Psoas muscle (tissue), 8 donors: ENCODE measurements at regions of chr11 and their contacts with region 1.

Region 1: DNA sequence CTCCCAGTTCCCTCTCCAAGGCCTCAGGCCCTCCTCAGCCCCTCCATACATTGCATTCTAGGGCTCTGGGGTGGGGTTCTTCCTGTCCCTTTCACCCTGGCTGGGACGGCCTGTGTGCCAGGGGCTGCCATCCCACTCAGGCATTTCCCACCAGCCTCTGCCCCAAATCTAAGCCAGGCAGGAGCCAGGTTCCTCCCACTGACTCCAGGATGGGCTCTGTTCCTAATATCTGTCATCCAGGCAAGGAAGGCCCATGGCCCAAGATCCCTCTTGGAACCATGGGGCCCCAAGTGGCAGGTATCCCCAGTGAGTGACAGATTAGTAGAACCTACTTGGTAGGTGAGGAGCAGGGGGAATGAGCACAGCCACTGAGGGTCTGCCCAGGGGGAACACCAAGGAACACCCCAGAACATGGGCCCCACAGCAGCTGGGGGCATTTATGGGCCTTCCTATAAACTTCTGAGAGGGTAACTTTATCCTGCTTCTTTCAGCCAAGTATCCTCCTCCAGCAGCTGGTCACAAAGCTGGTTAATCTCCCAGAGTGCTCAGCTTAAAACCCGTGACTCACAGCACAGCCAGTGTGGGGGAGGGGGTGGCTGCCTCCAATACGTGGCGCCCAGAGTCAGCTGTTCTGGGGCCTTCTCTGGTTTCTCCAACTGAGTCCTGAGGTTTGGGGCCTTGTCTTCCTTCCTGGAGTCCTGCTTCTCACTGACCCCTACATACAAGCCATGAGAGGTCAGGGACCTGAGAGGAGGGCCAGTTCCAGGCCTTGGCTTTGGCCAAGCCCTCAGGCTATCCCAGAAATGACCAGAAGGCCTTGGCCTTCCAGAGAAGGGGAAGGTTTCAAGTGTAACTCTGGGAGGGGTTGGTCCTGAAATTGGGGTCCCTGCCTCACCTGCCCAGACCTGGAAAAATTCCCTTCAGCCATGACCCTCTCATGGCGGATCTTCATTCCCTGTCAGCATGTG is 19.9 kb upstream of the MYOD1 start:
- DNase-seq: peak; percentile 85 to 95
- ATAC-seq: peak; percentile 87 to 91 (median 88)
- H3K4me3 ChIP-seq: no peak overlapping the region
- H3K27ac ChIP-seq: peak overlapping the region; percentile 96
- H3K4me1 ChIP-seq: peaks cover 57% of the 10 kb centered on the region
- H3K27me3 ChIP-seq: no peaks in the 10 kb centered on the region
- CTCF ChIP-seq: no peak

Region 2: GRCh38 chr11:17683378-17684161 is 15.9 kb before region 1 on chr11:
- intact Hi-C with region 1: loop called in 1 of 2 experiments (anchors 1 kb)
- DNase-seq: peak; percentile 71 to 82
- ATAC-seq: peak; percentile 69 to 73 (median 70)
- H3K4me3 ChIP-seq: no peak overlapping the region
- H3K27ac ChIP-seq: peak overlapping the region; percentile 88
- H3K4me1 ChIP-seq: peaks cover 52% of the 10 kb centered on the region
- H3K27me3 ChIP-seq: no peaks in the 10 kb centered on the region
- CTCF ChIP-seq: no peak

Region 3: DNA sequence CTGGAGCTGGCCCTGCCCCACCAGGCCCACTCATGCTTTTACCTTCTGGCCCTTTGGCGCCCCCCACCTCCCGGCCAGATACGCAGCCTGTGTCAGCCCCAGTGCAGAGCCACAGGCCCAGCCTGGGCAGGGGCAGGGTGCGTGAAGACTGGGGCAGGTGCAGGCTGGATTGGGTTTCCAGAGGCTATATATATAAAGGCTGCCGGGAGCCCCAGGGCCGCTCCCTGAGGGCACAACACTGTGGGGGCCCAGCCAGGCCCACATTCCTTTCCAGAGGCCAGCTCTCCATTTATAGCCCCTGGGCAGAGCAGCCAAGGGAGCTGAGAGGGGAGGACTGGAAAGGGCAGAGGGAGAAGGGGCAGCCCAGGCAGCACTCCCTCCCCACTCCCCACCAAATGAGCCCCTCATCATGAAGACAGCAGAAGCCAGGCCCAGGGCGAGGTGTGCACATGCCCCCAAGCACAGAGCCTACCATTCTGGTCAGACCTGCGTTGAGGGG is 15.0 kb after region 1 on chr11:
- intact Hi-C with region 1: loop called in 1 of 2 experiments (anchors 1 kb)
- DNase-seq: peak; percentile 82 to 95
- ATAC-seq: peak; percentile 87 to 92 (median 89)
- H3K4me3 ChIP-seq: peak overlapping the region; percentile 39
- H3K27ac ChIP-seq: peak overlapping the region; percentile 96
- H3K4me1 ChIP-seq: peaks cover 42% of the 10 kb centered on the region
- H3K27me3 ChIP-seq: peaks cover 0 to 3% (median 0%) of the 10 kb centered on the region in 3 donors
- CTCF ChIP-seq: peak; percentile 37